Caco-2 (cell line): ENCODE measurements at regions of chr3 and their contacts with region 1.

Region 1: DNA sequence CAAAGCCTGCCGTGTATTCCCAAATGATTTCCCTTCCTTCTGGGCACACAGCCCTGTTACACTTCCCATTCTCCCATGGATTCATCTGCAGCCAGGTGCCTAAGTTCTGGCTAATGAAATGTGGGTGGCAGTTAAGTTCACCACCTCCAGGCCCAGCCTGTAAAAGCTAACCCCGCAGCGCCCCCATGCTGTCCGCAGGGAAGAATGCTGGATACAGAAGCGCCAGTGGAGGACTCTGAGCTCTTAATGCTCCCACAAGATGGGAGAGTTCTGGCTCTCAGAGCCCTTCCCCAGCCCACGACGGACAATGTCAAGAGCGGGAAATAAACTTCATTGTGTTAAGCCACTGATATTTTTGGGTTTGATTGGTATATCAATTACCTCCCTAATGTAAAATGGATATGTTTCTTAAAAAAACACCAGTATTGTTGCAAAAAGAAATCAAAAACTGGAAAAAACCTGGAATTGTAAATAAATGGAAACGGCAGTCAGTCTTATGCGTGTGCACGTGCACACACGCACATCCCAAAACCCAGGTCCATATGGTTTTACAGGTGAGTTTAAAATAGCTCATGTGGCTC is 37.7 kb upstream of the FGD5 start:
- DNase-seq: peak; percentile 78
- H3K4me3 ChIP-seq: no peak overlapping the region
- H3K4me3 Mint-ChIP-seq: no peak overlapping the region
- H3K27ac Mint-ChIP-seq: no peak overlapping the region
- H3K4me1 ChIP-seq: no peaks in the 10 kb centered on the region
- H3K4me1 Mint-ChIP-seq: no peaks in the 10 kb centered on the region
- H3K27me3 ChIP-seq: no peaks in the 10 kb centered on the region
- H3K27me3 Mint-ChIP-seq: peaks cover under 1% of the 10 kb centered on the region
- CTCF ChIP-seq: peak; percentile 78 to 83

Region 2: DNA sequence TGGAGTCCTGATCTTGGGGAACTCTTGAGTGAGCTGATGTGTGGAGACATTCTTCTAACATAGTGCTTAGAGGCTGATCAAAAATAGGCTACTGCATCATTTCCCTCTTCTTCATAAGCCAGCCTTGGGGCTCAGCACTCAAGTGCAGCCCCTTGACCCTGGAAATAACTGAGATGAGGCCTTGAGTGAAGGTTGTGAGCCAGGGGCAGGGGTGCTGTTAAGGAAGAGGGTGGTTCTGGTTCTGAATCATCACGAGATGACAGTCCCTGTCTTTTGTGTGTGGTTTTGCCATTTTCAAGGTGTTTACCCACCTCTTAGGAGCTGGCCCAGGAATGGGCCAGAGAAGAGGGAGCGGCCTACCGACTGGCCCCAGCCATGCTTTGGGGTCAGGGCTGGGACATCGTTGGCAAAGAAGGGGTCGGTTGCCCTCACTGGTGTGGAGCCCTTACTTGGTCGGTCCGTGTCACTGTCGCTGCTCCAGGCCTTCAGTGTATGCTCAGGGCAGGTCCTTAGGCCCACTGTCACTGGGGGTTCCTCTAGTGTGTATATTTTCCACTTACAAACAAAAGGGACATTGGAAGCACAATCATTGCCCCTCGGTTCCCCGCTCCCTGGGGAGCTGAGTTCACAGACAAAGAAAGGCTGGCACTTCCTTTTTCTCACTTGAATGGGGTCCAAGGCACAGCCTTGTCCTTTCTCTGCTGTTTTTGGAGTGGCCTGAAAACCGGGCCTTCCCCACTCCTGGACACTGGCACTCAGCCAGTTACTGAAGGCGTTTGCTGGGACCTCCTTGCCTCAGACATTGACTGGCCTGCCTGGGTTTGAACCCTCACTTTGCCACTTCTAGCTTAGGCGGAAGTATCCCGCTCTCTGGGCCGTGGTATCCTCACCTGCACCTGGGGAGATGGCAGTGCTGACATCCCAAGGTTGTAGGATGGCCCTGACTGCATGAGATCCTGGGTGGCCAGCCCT is 332.0 kb before region 1 on chr3:
- CTCF ChIA-PET with region 1: no interaction called
- POLR2A ChIA-PET with region 1: no interaction called
- intact Hi-C with region 1: no loop called
- DNase-seq: no peak
- H3K4me3 ChIP-seq: no peak overlapping the region
- H3K4me3 Mint-ChIP-seq: no peak overlapping the region
- H3K27ac Mint-ChIP-seq: no peak overlapping the region
- H3K4me1 ChIP-seq: no peaks in the 10 kb centered on the region
- H3K4me1 Mint-ChIP-seq: no peaks in the 10 kb centered on the region
- H3K27me3 ChIP-seq: no peaks in the 10 kb centered on the region
- H3K27me3 Mint-ChIP-seq: no peaks in the 10 kb centered on the region
- CTCF ChIP-seq: no peak

Region 3: DNA sequence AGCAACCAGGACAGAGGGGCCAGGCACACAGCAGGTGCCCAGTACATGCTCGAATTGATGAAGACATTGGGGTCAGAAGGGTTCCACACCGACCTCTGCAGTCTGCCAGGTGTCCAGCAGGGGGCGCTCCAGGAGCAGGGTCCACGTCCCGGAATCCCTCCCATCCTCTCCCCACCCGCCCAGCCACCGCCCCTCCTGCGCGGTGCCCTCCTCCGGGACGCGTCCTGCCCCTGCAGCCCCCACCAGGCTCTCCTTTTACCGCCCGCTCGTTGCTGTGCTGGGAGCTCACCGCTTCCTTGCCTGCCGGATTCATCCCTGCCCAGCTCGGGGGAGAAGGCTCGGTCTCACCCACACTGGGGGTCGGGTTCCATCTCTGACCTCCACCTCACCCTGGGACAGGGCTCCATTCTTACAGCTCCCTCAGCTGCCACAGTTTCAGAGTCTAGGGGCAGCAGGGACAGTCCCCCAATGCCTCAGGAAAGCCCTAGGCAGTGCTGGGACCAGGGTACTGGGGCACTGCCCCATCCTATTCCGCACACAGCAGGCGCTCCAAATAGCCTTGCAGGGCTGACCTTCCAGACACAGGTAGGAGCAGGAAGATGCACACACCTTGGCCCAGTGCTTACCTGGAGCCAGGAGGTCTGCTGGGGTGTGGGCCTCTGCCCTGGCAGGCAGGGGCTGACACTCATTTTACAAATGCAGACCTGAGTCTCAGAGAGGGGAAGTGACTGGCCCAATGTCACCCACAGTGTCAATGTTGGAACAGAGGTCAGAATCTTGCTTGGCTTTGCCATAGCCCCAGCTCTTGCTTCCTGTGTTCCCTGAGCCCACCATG is 271.8 kb before region 1 on chr3:
- CTCF ChIA-PET with region 1: no interaction called
- POLR2A ChIA-PET with region 1: no interaction called
- intact Hi-C with region 1: loop called (anchors 2 kb)
- DNase-seq: peak; percentile 72 to 85
- H3K4me3 ChIP-seq: no peak overlapping the region
- H3K4me3 Mint-ChIP-seq: peak overlapping the region; percentile 27
- H3K27ac Mint-ChIP-seq: no peak overlapping the region
- H3K4me1 ChIP-seq: no peaks in the 10 kb centered on the region
- H3K4me1 Mint-ChIP-seq: no peaks in the 10 kb centered on the region
- H3K27me3 ChIP-seq: no peaks in the 10 kb centered on the region; the same call in 1 of the 2 replicates
- H3K27me3 Mint-ChIP-seq: no peaks in the 10 kb centered on the region
- CTCF ChIP-seq: peak; percentile 91 to 98

Region 4: GRCh38 chr3:14633819-14634424 is 147.1 kb before region 1 on chr3:
- CTCF ChIA-PET with region 1: interaction called, 6 read pairs
- POLR2A ChIA-PET with region 1: no interaction called
- intact Hi-C with region 1: loop called (anchors 1 kb)
- DNase-seq: peak; percentile 56 to 68
- H3K4me3 ChIP-seq: no peak overlapping the region
- H3K4me3 Mint-ChIP-seq: no peak overlapping the region
- H3K27ac Mint-ChIP-seq: no peak overlapping the region
- H3K4me1 ChIP-seq: no peaks in the 10 kb centered on the region
- H3K4me1 Mint-ChIP-seq: no peaks in the 10 kb centered on the region
- H3K27me3 ChIP-seq: no peaks in the 10 kb centered on the region
- H3K27me3 Mint-ChIP-seq: no peaks in the 10 kb centered on the region
- CTCF ChIP-seq: peak; percentile 62 to 77

Region 5: DNA sequence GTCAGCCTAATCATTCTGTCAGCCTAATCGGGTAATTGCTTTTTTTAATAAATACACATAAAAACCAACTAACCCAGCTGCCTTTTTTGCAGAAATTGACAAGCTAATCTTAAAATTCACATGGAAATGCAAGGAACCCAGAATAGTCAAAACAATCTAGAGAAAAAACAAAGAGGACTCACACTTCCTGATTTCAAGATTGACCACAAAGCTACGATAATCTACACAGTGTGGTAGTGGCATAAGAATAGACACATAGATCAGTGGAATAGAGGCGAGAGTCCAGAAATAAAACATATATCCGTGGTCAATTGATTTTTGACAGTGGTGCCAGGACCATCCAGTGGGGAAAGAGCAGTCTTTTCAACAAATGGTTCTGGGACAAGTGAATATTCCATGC is 108.4 kb before region 1 on chr3:
- CTCF ChIA-PET with region 1: interaction called, 28 read pairs
- POLR2A ChIA-PET with region 1: no interaction called
- intact Hi-C with region 1: loop called (anchors 1 kb)
- DNase-seq: no peak
- H3K4me3 ChIP-seq: no peak overlapping the region
- H3K4me3 Mint-ChIP-seq: no peak overlapping the region
- H3K27ac Mint-ChIP-seq: no peak overlapping the region
- H3K4me1 ChIP-seq: peaks cover 13% of the 10 kb centered on the region
- H3K4me1 Mint-ChIP-seq: peaks cover 15% of the 10 kb centered on the region
- H3K27me3 ChIP-seq: no peaks in the 10 kb centered on the region
- H3K27me3 Mint-ChIP-seq: no peaks in the 10 kb centered on the region
- CTCF ChIP-seq: no peak

Region 6: DNA sequence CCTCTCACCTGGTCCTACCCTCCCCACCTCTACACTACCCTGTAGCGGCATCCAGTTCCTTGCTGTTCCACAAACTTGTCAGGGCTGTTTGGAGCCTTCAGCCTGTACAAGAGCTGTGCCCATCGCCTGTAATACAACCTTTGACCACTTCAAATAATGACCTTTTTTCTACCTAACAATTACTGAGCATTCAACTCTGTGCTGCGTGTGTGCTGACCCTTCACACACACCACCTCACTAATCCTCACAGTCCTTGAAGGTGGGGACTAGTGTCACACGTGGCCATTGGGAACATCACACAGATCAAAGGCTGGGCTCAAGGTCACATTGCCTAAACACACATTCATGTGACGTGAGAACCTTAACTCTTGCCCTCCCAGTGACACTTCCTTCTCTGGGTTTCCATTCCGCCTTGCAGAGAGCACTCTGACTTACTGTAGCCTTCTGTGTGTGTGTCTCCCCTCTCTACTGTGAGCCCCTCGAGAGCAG is 103.0 kb before region 1 on chr3:
- CTCF ChIA-PET with region 1: interaction called, 28 read pairs
- POLR2A ChIA-PET with region 1: no interaction called
- intact Hi-C with region 1: loop called (anchors 1 kb)
- DNase-seq: peak; percentile 66 to 70
- H3K4me3 ChIP-seq: no peak overlapping the region
- H3K4me3 Mint-ChIP-seq: no peak overlapping the region
- H3K27ac Mint-ChIP-seq: peak overlapping the region; percentile 75
- H3K4me1 ChIP-seq: peaks cover 22% of the 10 kb centered on the region
- H3K4me1 Mint-ChIP-seq: peaks cover 32% of the 10 kb centered on the region
- H3K27me3 ChIP-seq: no peaks in the 10 kb centered on the region
- H3K27me3 Mint-ChIP-seq: no peaks in the 10 kb centered on the region
- CTCF ChIP-seq: no peak

Region 7: GRCh38 chr3:14769544-14770325 is 11.3 kb before region 1 on chr3:
- CTCF ChIA-PET with region 1: interaction called, 14 read pairs
- POLR2A ChIA-PET with region 1: no interaction called
- intact Hi-C with region 1: no loop called
- DNase-seq: no peak
- H3K4me3 ChIP-seq: no peak overlapping the region
- H3K4me3 Mint-ChIP-seq: no peak overlapping the region
- H3K27ac Mint-ChIP-seq: no peak overlapping the region
- H3K4me1 ChIP-seq: no peaks in the 10 kb centered on the region
- H3K4me1 Mint-ChIP-seq: no peaks in the 10 kb centered on the region
- H3K27me3 ChIP-seq: no peaks in the 10 kb centered on the region; the same call in 1 of the 2 replicates
- H3K27me3 Mint-ChIP-seq: peaks cover 3% of the 10 kb centered on the region
- CTCF ChIP-seq: no peak